ENCODE measurements at regions of chr9 and their contacts with region 1.

Region 1: DNA sequence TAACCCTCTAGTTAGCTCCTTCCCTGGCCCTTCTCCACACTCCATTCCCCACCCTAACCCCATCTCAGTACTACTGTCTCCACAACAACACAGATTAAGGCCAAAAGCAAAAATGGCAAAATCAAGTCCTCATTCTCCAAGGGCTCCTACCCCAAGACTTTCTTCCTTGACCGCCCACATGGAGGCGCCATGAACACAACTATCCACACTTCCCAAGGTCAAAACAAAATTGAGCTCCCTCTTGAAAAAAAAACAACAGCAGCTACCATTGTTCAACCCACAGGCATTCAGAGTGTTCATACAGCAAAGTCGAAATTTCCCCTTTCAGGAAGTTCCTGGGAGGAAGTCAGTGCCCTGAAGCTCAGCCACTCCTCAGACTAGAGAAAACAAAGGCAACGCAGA is 54.4 kb downstream of the GNAQ start:
- DNase-seq: peak in 1 of 2 experiments; percentile 44
- H3K4me3 ChIP-seq: no peak overlapping the region
- H3K27ac ChIP-seq: no peak overlapping the region; the same call in 1 of the 2 replicates
- H3K4me1 ChIP-seq: peaks cover 0 to 11% (median 10%) of the 10 kb centered on the region in 4 experiments; a peak in 3 of 7 replicates
- H3K27me3 ChIP-seq: no peaks in the 10 kb centered on the region
- CTCF ChIP-seq: peak; percentile 50 to 76 (median 75)
- EP300 ChIP-seq: no peak
- POLR2A ChIP-seq: no peak
- RAD21 ChIP-seq: peak; percentile 83 to 90

Region 2: GRCh38 chr9:77856615-77857014 is 120.6 kb before region 1 on chr9:
- CTCF ChIA-PET with region 1: no interaction called
- POLR2A ChIA-PET with region 1: no interaction called
- DNase-seq: no peak
- H3K4me3 ChIP-seq: no peak overlapping the region
- H3K27ac ChIP-seq: no peak overlapping the region
- H3K4me1 ChIP-seq: peaks cover 0 to 7% (median 3%) of the 10 kb centered on the region in 4 experiments; a peak in 3 of 7 replicates
- H3K27me3 ChIP-seq: no peaks in the 10 kb centered on the region
- CTCF ChIP-seq: no peak
- EP300 ChIP-seq: no peak
- POLR2A ChIP-seq: no peak
- RAD21 ChIP-seq: no peak

Region 3: DNA sequence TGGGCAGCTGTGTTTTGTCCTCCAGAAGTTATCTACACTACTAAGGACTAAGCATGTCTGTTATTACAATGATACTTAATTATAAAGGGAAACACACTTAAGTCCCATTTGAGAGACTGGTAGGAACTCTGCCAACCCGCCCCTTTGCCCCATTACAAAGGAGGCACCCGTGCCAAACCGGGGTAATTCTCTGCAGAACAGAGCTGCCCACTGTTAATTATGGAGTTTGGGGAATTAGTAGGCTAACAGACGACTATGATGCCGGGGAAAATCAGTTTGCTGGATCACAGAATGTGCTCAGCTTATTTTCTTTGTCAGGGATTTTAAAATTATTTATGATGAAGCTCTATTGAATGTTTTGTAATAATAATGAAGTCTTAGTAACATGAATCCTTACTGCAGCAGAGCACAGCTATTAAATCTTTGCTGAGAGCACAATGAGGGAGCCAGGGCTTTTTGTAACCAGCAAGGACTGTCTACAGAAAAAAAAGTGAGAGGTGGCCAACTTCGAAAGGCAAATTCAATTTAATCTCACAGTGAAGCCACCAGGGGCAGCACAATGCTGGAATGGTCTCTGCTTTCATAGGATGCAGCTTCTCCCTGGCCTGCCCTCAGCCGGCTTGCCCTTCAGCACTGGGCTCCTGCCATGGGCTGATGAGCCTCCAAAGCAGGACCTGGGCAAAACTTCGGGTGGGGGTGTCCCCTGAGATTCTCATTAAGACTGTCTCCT is 80.1 kb before region 1 on chr9:
- CTCF ChIA-PET with region 1: interaction called, 18 read pairs
- POLR2A ChIA-PET with region 1: no interaction called
- DNase-seq: no peak
- H3K4me3 ChIP-seq: no peak overlapping the region
- H3K27ac ChIP-seq: no peak overlapping the region
- H3K4me1 ChIP-seq: peaks cover 0 to 3% (median 2%) of the 10 kb centered on the region in 4 experiments; a peak in 3 of 7 replicates
- H3K27me3 ChIP-seq: no peaks in the 10 kb centered on the region
- CTCF ChIP-seq: peak; percentile 34 to 62 (median 55)
- EP300 ChIP-seq: no peak
- POLR2A ChIP-seq: no peak
- RAD21 ChIP-seq: peak; percentile 44 to 50; a peak in 3 of 4 replicates

Region 4: DNA sequence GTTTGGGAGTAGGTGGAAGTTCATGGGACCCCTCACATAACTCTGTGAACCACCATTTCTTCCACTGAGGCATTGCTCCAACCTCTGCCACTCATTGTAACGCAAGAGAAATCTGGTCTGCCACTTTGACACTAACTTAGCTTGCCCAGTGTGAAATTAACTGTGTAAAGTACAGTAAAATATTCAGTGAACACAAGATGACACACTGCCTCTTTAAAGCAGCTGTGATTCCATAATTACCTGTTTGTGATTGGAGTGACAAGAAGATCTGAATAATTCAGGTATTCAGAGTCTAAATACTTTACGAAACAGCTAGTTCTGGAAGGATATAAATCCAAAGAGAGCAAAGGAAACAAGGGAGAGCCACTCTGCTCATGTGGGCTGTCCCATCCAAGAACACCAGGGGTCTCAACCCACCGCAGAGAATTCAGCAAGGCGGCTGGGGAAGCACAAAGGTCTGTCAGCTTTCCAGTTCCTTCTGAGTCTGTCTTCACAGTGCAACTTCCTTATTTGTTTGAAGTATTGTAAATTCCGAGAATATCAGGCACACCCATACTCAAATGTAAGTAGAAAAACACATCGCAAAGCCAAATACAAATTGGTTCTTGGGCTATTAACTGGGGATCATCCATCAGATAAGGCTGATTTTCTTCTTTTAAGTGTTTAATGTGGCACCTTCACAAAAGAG is 32.5 kb before region 1 on chr9:
- CTCF ChIA-PET with region 1: interaction called, 16 read pairs
- POLR2A ChIA-PET with region 1: no interaction called
- DNase-seq: no peak
- H3K4me3 ChIP-seq: no peak overlapping the region
- H3K27ac ChIP-seq: no peak overlapping the region
- H3K4me1 ChIP-seq: peaks cover 4 to 7% (median 5%) of the 10 kb centered on the region in 4 experiments; a peak in 5 of 7 replicates
- H3K27me3 ChIP-seq: no peaks in the 10 kb centered on the region
- CTCF ChIP-seq: peak in 2 of 3 experiments; percentile 25 to 31; a peak in 2 of 4 replicates
- EP300 ChIP-seq: no peak
- POLR2A ChIP-seq: no peak
- RAD21 ChIP-seq: peak; percentile 30 to 49; a peak in 3 of 4 replicates

Region 5: DNA sequence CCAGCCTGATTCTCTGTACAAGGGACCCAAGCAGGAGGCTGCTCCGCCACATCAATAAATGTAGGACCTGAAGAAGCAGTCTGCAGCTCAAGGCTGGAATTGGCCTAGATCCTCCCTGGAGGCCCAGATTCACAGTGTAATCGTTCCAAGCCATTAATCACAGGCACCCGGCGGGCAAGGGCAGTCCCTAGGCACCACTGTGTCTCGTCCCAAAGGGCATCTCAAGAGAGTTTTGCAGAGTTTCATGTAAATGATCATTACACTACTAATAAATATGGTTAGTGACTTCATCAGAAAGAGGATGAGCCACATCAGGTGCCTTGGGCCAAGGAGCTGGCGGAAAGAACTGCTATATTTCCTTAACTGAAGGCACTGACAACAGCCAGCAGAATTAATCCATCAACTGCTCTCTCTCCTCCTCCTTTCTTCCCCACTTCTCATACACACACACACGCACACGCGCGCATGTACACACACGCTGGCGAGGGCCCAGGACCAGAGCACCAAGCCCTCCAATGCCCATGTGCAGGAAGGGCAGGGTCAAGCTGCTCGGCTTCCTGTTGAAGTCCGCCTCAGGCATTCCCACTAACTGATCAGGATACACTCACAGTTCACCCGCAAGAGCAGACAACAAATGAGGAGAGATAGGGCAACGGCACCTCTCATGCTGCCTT is 20.5 kb after region 1 on chr9:
- CTCF ChIA-PET with region 1: interaction called, 13 read pairs
- POLR2A ChIA-PET with region 1: no interaction called
- DNase-seq: no peak
- H3K4me3 ChIP-seq: no peak overlapping the region
- H3K27ac ChIP-seq: no peak overlapping the region
- H3K4me1 ChIP-seq: peaks cover 0 to 2% (median 0%) of the 10 kb centered on the region in 4 experiments; a peak in 1 of 7 replicates
- H3K27me3 ChIP-seq: no peaks in the 10 kb centered on the region
- CTCF ChIP-seq: no peak
- EP300 ChIP-seq: no peak
- POLR2A ChIP-seq: no peak
- RAD21 ChIP-seq: no peak

Region 6: DNA sequence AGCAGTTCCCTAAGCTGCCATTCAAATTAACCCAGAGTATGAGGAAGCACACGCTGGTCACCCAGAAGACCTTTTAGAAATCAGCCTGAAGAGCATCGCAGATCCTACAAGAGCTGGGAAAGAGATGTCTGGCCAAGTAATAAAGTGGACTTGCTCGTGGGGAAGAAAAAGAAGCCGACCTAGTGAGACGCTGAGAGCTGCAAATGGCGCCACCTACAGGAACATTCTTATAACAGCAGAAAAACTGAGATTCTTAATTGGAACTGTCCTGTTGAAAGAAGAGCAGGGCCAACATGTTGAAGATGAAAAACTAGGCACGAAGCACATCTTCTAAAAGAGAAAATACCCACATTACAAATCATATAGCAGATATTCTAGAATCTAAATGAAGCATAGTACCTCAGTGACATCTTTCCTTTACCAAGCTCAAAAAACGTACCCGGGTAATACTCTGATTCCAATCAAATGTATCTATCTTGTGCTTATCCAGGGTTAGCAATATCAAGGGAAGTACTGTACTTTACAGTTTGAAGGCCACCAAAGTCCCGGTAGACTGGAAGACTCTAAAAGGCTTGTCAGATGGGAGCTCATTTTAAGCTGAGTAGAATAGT is 58.3 kb after region 1 on chr9:
- CTCF ChIA-PET with region 1: interaction called, 76 read pairs
- POLR2A ChIA-PET with region 1: interaction called, 6 read pairs
- DNase-seq: no peak
- H3K4me3 ChIP-seq: no peak overlapping the region
- H3K27ac ChIP-seq: no peak overlapping the region
- H3K4me1 ChIP-seq: peaks cover 0 to 5% (median 0%) of the 10 kb centered on the region in 4 experiments; a peak in 3 of 7 replicates
- H3K27me3 ChIP-seq: no peaks in the 10 kb centered on the region
- CTCF ChIP-seq: peak; percentile 16 to 76 (median 74)
- EP300 ChIP-seq: no peak
- POLR2A ChIP-seq: no peak
- RAD21 ChIP-seq: peak; percentile 79 to 88

Region 7: GRCh38 chr9:78121488-78121887 is 144.3 kb after region 1 on chr9:
- CTCF ChIA-PET with region 1: interaction called, 27 read pairs
- POLR2A ChIA-PET with region 1: no interaction called
- DNase-seq: peak in 1 of 2 experiments; percentile 83
- H3K4me3 ChIP-seq: no peak overlapping the region
- H3K27ac ChIP-seq: no peak overlapping the region
- H3K4me1 ChIP-seq: no peaks in the 10 kb centered on the region; a peak in 1 of 7 replicates
- H3K27me3 ChIP-seq: no peaks in the 10 kb centered on the region
- CTCF ChIP-seq: peak in 2 of 3 experiments; percentile 67 to 69; a peak in 3 of 4 replicates
- EP300 ChIP-seq: no peak
- POLR2A ChIP-seq: no peak
- RAD21 ChIP-seq: peak; percentile 84 to 85

Region 8: GRCh38 chr9:78371981-78372380 is 394.8 kb after region 1 on chr9:
- CTCF ChIA-PET with region 1: no interaction called
- POLR2A ChIA-PET with region 1: no interaction called
- DNase-seq: no peak
- H3K4me3 ChIP-seq: no peak overlapping the region
- H3K27ac ChIP-seq: no peak overlapping the region
- H3K4me1 ChIP-seq: peaks cover 0 to under 1% (median 0%) of the 10 kb centered on the region in 4 experiments; a peak in 1 of 7 replicates
- H3K27me3 ChIP-seq: no peaks in the 10 kb centered on the region
- CTCF ChIP-seq: no peak
- EP300 ChIP-seq: no peak
- POLR2A ChIP-seq: no peak
- RAD21 ChIP-seq: no peak

Measured in H1 (cell line).